Astrocyte of the cerebellum (primary cell): ENCODE measurements at regions of chr5 and their contacts with region 1.

Region 1: GRCh38 chr5:78881884-78882283 is 103.2 kb downstream of the ARSB start:
- DNase-seq: no peak
- H3K4me3 ChIP-seq: no peak overlapping the region
- CTCF ChIP-seq: no peak

Region 2: DNA sequence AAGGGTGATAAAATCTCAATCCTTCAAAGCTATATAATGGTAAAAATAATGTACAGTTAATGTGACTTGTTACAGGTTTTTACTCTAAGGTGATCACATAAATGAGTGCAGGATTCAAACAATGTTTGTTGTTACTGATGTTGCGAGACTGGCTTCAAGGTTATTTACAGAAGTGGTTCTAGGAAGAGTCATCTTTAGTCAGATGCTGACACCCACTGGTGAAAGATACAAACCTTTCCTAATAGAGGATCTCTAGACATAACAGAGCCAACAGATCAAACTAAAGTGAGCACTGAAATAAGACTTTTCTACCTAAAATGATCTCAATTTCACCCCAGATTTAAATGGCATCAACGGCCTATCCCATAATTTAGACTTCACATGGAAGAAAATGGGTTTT is 83.0 kb after region 1 on chr5:
- in situ Hi-C with region 1: loop called (anchors 5 kb)
- DNase-seq: peak; percentile 78
- H3K4me3 ChIP-seq: no peak overlapping the region
- CTCF ChIP-seq: peak; percentile 45